Activated B cell treated with CpG ODN at 0.5 μM for 24 hours (primary cell): ENCODE measurements at regions of chr14 and their contacts with region 1.

Region 1: DNA sequence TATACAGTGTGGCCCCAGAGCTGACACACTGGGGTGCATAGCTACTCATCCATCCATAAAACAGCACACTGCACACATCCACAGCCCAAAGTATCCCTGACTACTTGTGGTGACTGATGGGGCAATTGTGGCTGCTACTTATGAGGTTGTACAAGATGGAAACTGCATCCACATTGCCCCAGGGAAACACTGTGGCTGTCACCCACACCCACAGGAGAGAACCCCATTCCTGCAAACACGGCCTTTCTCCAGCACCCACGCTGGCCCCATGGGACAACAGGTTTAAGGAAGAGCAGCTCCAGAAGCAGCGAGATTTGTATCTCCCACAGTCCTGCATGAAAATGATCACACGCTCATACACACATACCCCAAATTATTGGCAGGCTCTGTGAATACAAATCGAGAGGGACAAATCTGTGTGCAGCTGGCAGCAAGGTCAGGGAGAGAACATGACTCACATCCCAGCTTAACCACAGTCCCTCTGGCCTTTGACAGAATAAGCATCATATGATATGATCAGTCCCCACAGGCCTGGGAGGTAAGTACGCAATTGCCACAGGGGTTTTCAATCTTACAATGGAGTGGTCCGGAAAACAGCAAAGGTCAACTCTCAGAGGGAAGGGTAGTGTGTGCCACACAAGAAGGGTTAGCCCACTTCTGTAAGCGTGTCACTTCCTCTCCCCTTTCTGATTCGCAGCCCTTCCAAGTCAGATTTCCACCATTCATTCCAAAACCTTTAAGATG is 61.9 kb downstream of the ESR2 start:
- DNase-seq: no peak
- ATAC-seq: peak; percentile 11
- H3K4me3 Mint-ChIP-seq: peak overlapping the region; percentile 53
- H3K27ac Mint-ChIP-seq: peak overlapping the region; percentile 97
- H3K4me1 Mint-ChIP-seq: peaks cover 61% of the 10 kb centered on the region
- H3K27me3 Mint-ChIP-seq: no peaks in the 10 kb centered on the region
- CTCF ChIP-seq: no peak

Region 2: GRCh38 chr14:63641473-63642228 is 590.6 kb before region 1 on chr14 and contains the start of gene WDR89:
- CTCF ChIA-PET with region 1: no interaction called
- POLR2A ChIA-PET with region 1: interaction called, 3 read pairs
- intact Hi-C with region 1: loop called (anchors 1 kb)
- DNase-seq: peak; percentile 84
- ATAC-seq: peak; percentile 83
- H3K4me3 Mint-ChIP-seq: peak within 1 kb of the TSS; percentile 92
- H3K27ac Mint-ChIP-seq: peak within 1 kb of the TSS; percentile 98
- H3K4me1 Mint-ChIP-seq: peaks cover 34% of the 10 kb centered on the region
- H3K27me3 Mint-ChIP-seq: no peaks in the 10 kb centered on the region
- CTCF ChIP-seq: no peak
- total RNA-seq, gene WDR89: 21.9 and 24.4 TPM in 2 replicates

Region 3: GRCh38 chr14:64170181-64170580 is 62.1 kb before region 1 on chr14:
- CTCF ChIA-PET with region 1: interaction called, 4 read pairs
- POLR2A ChIA-PET with region 1: interaction called, 8 read pairs
- intact Hi-C with region 1: loop called (anchors 2 kb)
- DNase-seq: no peak
- ATAC-seq: peak; percentile 94
- H3K4me3 Mint-ChIP-seq: no peak overlapping the region
- H3K27ac Mint-ChIP-seq: peak overlapping the region; percentile 59
- H3K4me1 Mint-ChIP-seq: peaks cover 14% of the 10 kb centered on the region
- H3K27me3 Mint-ChIP-seq: no peaks in the 10 kb centered on the region
- CTCF ChIP-seq: no peak

Region 4: GRCh38 chr14:64209444-64210131 is 22.7 kb before region 1 on chr14:
- CTCF ChIA-PET with region 1: interaction called, 9 read pairs
- POLR2A ChIA-PET with region 1: interaction called, 41 read pairs
- intact Hi-C with region 1: loop called (anchors 1 kb)
- DNase-seq: no peak
- ATAC-seq: peak; percentile 88
- H3K4me3 Mint-ChIP-seq: peak overlapping the region; percentile 65
- H3K27ac Mint-ChIP-seq: peak overlapping the region; percentile 82
- H3K4me1 Mint-ChIP-seq: peaks cover 33% of the 10 kb centered on the region
- H3K27me3 Mint-ChIP-seq: no peaks in the 10 kb centered on the region
- CTCF ChIP-seq: no peak

Region 5: GRCh38 chr14:64266239-64266638 is 34.0 kb after region 1 on chr14:
- CTCF ChIA-PET with region 1: no interaction called
- POLR2A ChIA-PET with region 1: interaction called, 14 read pairs
- intact Hi-C with region 1: no loop called
- DNase-seq: no peak
- ATAC-seq: peak; percentile 61
- H3K4me3 Mint-ChIP-seq: no peak overlapping the region
- H3K27ac Mint-ChIP-seq: no peak overlapping the region
- H3K4me1 Mint-ChIP-seq: peaks cover 26% of the 10 kb centered on the region
- H3K27me3 Mint-ChIP-seq: no peaks in the 10 kb centered on the region
- CTCF ChIP-seq: no peak

Region 6: DNA sequence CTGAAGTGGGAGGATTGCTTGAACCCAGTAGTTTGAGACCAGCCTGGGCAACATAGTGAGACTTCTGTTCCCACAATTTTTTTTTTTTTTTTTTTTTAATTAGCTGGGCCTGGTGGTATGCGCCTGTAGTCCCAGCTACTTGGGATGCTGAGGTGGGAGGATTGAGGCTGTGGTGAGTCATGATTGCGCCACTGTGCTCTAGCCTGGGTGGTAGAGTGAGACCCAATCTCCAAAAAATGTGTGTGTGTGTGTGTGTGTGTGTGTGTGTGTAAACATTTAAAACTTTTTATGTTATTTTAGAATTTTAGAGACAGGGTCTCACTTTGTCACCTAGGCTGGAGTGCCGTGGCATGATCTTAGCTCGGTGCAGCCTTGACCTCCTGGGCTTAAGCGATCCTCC is 324.3 kb after region 1 on chr14:
- CTCF ChIA-PET with region 1: no interaction called
- POLR2A ChIA-PET with region 1: no interaction called
- intact Hi-C with region 1: no loop called
- DNase-seq: no peak
- ATAC-seq: no peak
- H3K4me3 Mint-ChIP-seq: no peak overlapping the region
- H3K27ac Mint-ChIP-seq: no peak overlapping the region
- H3K4me1 Mint-ChIP-seq: no peaks in the 10 kb centered on the region
- H3K27me3 Mint-ChIP-seq: peaks cover 2% of the 10 kb centered on the region
- CTCF ChIP-seq: no peak